Adrenal gland (tissue), 19 donors: ENCODE measurements at regions of chr14 and their contacts with region 1.

Region 1: GRCh38 chr14:21068521-21069387 is 1.4 kb upstream of the ARHGEF40 start:
- DNase-seq: peak in 4 of 7 donors; percentile 20 to 73 (median 46)
- H3K4me3 ChIP-seq: peak overlapping the region in 1 of 4 donors; percentile 88
- H3K27ac ChIP-seq: peak overlapping the region in 3 of 5 donors; percentile 85 to 93 (median 90)
- H3K4me1 ChIP-seq: peaks cover 25 to 31% of the 10 kb centered on the region in 2 donors
- H3K27me3 ChIP-seq: no peaks in the 10 kb centered on the region
- CTCF ChIP-seq: peak; percentile 17 to 66 (median 54)
- POLR2A ChIP-seq: no peak

Region 2: DNA sequence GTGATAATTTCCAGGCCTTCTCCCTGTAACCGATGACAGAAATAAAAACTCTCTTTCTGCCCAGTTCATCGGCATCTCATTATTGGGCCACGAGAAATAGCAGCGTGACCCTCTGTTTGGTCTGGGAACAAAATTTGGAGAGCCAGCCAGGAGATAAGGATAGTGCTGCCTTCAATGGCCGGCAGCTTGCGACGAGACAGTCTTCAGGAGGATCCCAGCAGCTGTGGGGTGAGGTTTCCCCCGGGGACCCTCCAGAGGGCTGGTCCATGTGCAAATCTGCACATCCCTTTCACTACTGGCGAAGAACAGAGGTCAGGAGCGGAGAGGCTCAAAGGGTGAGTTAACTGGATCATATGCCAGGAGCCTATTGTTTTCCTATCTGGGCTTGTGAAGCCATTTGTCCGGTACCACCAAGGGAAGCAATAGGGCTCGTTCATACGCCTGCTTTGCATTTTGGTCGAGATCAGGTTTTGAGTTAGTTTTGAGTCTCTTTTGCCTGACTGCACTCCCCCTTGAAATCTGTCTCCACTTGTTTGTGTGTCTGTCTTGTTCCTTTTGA is 64.9 kb before region 1 on chr14:
- intact Hi-C with region 1: no loop called
- DNase-seq: no peak
- H3K4me3 ChIP-seq: no peak overlapping the region
- H3K27ac ChIP-seq: no peak overlapping the region
- H3K4me1 ChIP-seq: no peaks in the 10 kb centered on the region
- H3K27me3 ChIP-seq: no peaks in the 10 kb centered on the region
- CTCF ChIP-seq: no peak
- POLR2A ChIP-seq: no peak

Region 3: GRCh38 chr14:21024585-21025370 is 44.0 kb before region 1 on chr14 and contains the start of gene NDRG2:
- intact Hi-C with region 1: no loop called
- DNase-seq: peak; percentile 79 to 91 (median 86)
- H3K4me3 ChIP-seq: peak within 1 kb of the TSS; percentile 64 to 71 (median 65)
- H3K27ac ChIP-seq: peak within 1 kb of the TSS; percentile 43 to 93 (median 68)
- H3K4me1 ChIP-seq: peaks cover 36 to 50% of the 10 kb centered on the region in 2 donors
- H3K27me3 ChIP-seq: no peaks in the 10 kb centered on the region
- CTCF ChIP-seq: no peak
- POLR2A ChIP-seq: peak; percentile 37 to 63
- total RNA-seq, gene NDRG2: 116 to 1,323 (median 677) TPM

Region 4: DNA sequence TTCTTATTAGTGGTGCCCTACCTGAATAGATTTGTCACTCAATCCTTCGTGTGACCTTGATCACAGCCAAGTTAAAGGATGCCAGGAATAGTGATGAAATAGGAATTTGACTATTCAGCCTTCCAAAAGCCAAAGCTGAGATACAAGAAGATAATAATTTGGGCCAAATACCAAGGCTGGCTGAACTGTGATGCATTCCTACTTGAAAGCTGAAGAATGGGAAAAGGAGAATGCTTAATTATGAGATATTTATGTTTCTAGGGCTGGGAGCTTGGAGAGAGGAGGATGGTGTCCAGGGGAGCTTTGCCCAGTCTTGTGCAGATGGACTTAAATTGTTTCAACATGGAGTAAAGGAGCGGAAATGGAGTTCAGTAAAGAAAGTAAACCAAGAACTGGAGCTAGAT is 21.4 kb before region 1 on chr14:
- intact Hi-C with region 1: loop called in 1 of 2 experiments (anchors 2 kb)
- DNase-seq: peak in 2 of 7 donors; percentile 48 to 49
- H3K4me3 ChIP-seq: no peak overlapping the region
- H3K27ac ChIP-seq: peak overlapping the region; percentile 13 to 81 (median 53)
- H3K4me1 ChIP-seq: peaks cover 38 to 51% of the 10 kb centered on the region in 2 donors
- H3K27me3 ChIP-seq: no peaks in the 10 kb centered on the region
- CTCF ChIP-seq: no peak
- POLR2A ChIP-seq: no peak